Endothelial cell of umbilical vein (primary cell): ENCODE measurements at regions of chr1 and their contacts with region 1.

Region 1: DNA sequence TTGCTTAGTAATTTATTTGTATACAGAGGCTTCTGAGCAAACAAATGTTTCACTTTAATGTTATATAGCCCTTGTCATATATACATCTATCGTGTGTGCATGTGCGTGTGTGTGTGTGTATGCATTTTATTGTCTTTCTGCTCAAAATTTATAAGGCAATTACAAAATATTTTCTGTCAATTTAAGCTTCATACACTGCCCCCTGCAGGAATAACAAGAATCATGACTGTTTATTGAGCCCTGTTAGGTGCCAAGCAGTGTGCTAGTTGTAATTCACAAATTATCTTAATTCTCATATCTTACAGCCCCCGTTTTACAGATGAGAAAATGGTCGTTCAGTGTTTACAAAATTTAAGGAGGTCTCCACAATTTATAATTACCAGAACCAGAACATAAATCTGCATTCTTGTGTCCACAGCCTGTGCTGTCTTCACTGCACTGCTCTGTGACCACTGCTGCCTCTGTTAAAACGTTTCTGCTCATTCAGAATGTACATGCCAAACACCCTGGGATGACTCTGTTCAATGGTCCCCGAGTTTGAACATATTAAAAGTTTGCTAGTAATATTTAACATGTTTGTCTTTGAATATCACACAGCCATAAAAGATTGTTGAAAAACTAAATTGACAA is 181.3 kb downstream of the ATP6V1G3 start:
- DNase-seq: peak; percentile 32
- H3K4me3 ChIP-seq: no peak overlapping the region
- H3K27ac ChIP-seq: no peak overlapping the region
- H3K4me1 ChIP-seq: no peaks in the 10 kb centered on the region
- H3K27me3 ChIP-seq: no peaks in the 10 kb centered on the region
- CTCF ChIP-seq: peak; percentile 27 to 36
- POLR2A ChIP-seq: no peak

Region 2: DNA sequence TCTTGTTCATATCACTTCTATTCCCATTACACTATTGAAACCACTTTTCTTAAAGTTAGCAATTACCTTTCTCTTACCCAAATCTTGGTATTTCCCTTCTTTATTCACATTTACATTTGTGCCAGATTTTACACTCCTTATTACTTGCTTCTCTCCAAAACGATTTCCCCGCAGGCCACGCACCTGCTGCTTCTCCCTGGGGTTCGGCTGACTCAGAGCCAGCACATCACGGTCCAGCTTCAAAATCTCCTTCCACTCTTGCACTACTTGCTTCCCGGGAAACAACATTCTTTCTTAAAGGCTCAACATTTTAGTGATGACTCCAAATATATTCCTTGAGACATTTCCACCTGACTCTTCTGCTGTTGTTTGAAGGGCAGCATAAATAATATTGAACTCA is 421.2 kb before region 1 on chr1:
- CTCF ChIA-PET with region 1: no interaction called
- POLR2A ChIA-PET with region 1: no interaction called
- dilution Hi-C with region 1: no loop called
- intact Hi-C with region 1: loop called (anchors 10 kb)
- DNase-seq: no peak
- H3K4me3 ChIP-seq: no peak overlapping the region
- H3K27ac ChIP-seq: no peak overlapping the region
- H3K4me1 ChIP-seq: no peaks in the 10 kb centered on the region
- H3K27me3 ChIP-seq: peaks cover 0 to 2% of the 10 kb centered on the region in 2 experiments
- CTCF ChIP-seq: no peak
- POLR2A ChIP-seq: no peak

Region 3: DNA sequence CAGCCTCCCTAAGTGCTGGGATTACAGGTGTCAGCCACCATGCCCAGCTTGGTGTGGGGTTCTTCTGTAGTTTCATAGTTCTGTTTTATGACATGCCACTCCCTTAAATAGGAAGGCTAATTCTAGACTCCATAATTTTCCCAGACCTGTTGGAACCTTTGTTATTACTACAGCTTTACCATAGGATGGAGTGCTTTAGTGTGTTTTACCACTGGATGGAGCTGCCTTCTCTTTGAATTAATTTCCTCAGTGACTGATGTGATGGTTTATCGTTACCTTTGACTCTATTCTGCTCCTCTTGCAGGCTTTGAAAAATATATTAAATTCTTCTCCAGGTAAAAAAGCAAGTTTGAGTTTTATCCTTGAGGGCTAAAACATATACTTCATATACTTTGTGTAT is 287.0 kb before region 1 on chr1:
- CTCF ChIA-PET with region 1: interaction called, 18 read pairs
- POLR2A ChIA-PET with region 1: no interaction called
- dilution Hi-C with region 1: no loop called
- intact Hi-C with region 1: loop called (anchors 1 kb)
- DNase-seq: peak; percentile 37
- H3K4me3 ChIP-seq: no peak overlapping the region
- H3K27ac ChIP-seq: no peak overlapping the region
- H3K4me1 ChIP-seq: no peaks in the 10 kb centered on the region
- H3K27me3 ChIP-seq: no peaks in the 10 kb centered on the region
- CTCF ChIP-seq: peak; percentile 4 to 26
- POLR2A ChIP-seq: no peak